PC-3 (cell line): ENCODE measurements at regions of chr15 and their contacts with region 1.

Region 1: GRCh38 chr15:77633134-77633912 is 611 bp upstream of the LINGO1 start:
- DNase-seq: peak; percentile 85
- ATAC-seq: peak; percentile 89
- H3K4me3 ChIP-seq: peak overlapping the region; percentile 68
- H3K27ac ChIP-seq: no peak overlapping the region
- H3K4me1 ChIP-seq: 0 out of 2 replicates have a peak, but pooled peaks cover 4% of the 10 kb centered on the region
- H3K27me3 ChIP-seq: peaks cover 28% of the 10 kb centered on the region
- CTCF ChIP-seq: peak; percentile 98

Region 2: GRCh38 chr15:77821188-77821958 is 188.1 kb after region 1 on chr15:
- CTCF ChIA-PET with region 1: interaction called, 11 read pairs
- POLR2A ChIA-PET with region 1: no interaction called
- intact Hi-C with region 1: loop called (anchors 1 kb)
- DNase-seq: peak; percentile 54
- ATAC-seq: peak; percentile 86
- H3K4me3 ChIP-seq: no peak overlapping the region
- H3K27ac ChIP-seq: no peak overlapping the region
- H3K4me1 ChIP-seq: no peaks in the 10 kb centered on the region
- H3K27me3 ChIP-seq: peaks cover 30% of the 10 kb centered on the region
- CTCF ChIP-seq: peak; percentile 80